ENCODE measurements at regions of chr13 and their contacts with region 1.

Region 1: DNA sequence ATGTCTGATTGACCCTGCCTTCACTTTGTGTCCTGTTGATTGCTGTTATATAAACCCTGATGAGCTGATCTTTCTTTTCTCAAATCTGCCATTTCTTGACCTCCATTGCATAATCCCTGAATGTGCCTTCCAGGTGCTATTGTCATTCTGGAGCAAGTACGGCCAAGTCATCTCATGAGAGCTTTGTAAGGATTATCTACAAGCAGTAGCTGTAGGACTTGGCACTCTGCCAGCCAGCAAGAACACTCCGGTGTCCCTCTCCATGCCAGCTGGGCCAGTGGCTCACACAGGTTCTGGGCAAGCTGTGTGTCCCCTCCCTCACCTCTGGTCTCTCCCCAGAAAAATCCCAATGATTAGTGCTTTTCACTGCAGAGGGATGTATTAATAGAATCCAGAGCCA is 348.1 kb downstream of the FOXO1 start:
- DNase-seq: peak; percentile 55
- H3K4me3 ChIP-seq: no peak overlapping the region
- H3K27ac ChIP-seq: no peak overlapping the region
- H3K4me1 ChIP-seq: peaks cover 16% of the 10 kb centered on the region
- H3K27me3 ChIP-seq: no peaks in the 10 kb centered on the region
- CTCF ChIP-seq: no peak
- POLR2A ChIP-seq: no peak

Region 2: GRCh38 chr13:39892721-39893685 is 425.4 kb before region 1 on chr13:
- CTCF ChIA-PET with region 1: no interaction called
- POLR2A ChIA-PET with region 1: no interaction called
- dilution Hi-C with region 1: no loop called
- intact Hi-C with region 1: loop called (anchors 5 kb)
- DNase-seq: peak; percentile 95
- H3K4me3 ChIP-seq: peak overlapping the region in 1 of 3 experiments; percentile 6
- H3K27ac ChIP-seq: peak overlapping the region; percentile 86
- H3K4me1 ChIP-seq: peaks cover 52% of the 10 kb centered on the region
- H3K27me3 ChIP-seq: no peaks in the 10 kb centered on the region
- CTCF ChIP-seq: no peak
- POLR2A ChIP-seq: no peak

Region 3: DNA sequence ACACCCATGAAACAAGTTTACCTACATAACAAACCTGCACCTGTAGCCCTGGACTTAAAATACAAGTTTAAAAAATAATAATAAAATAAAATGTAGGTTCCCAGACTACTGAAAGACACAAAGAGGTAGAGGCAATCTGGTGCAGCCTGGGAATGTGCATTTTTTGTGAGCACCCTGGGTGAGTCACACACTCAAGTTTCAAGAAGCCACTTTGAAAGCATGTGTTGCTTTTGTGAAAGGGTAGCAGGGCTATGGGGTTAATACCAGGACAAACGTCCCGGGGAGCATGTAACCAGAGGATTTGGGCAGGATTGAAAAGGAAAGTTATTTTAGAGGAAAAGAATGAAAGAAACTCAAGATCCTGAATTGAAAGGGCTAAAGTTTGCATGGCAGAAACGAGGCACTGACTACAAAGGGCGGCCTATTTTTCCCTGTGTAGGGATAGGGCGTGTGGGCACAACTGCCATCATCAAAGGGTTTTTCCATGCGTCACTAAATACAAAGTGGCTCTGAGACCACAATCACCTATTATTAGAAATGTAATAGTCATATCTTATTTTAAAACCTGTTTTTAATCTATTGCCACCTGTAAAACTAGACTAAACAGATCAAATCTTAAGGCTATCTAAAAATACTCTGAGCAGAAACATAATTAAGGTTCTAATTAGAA is 348.1 kb before region 1 on chr13:
- CTCF ChIA-PET with region 1: no interaction called
- POLR2A ChIA-PET with region 1: no interaction called
- dilution Hi-C with region 1: no loop called
- intact Hi-C with region 1: no loop called
- DNase-seq: no peak
- H3K4me3 ChIP-seq: no peak overlapping the region
- H3K27ac ChIP-seq: no peak overlapping the region
- H3K4me1 ChIP-seq: peaks cover 6% of the 10 kb centered on the region
- H3K27me3 ChIP-seq: no peaks in the 10 kb centered on the region
- CTCF ChIP-seq: no peak
- POLR2A ChIP-seq: no peak

Region 4: DNA sequence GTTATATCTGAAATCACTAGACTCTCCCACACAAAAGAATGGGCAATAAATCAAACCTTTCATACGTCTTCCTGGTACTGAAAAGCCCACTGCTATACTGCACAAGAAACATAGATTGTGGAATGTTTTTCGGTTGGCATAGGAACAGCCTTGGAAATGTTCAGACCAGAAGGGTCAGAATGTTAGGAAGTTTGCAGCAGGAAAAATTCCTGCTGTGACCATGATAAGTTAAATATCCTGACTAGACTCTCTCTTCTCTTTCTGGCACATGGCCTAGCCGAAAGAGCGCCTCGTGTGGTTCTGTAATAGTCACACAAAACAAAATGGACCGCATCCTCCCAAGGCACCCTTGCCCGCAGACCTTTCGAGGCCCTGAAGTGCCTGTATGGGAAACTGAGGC is 235.7 kb before region 1 on chr13:
- CTCF ChIA-PET with region 1: no interaction called
- POLR2A ChIA-PET with region 1: no interaction called
- dilution Hi-C with region 1: no loop called
- intact Hi-C with region 1: loop called (anchors 1 kb)
- DNase-seq: peak; percentile 99
- H3K4me3 ChIP-seq: no peak overlapping the region
- H3K27ac ChIP-seq: peak overlapping the region; percentile 71
- H3K4me1 ChIP-seq: peaks cover 11% of the 10 kb centered on the region
- H3K27me3 ChIP-seq: no peaks in the 10 kb centered on the region
- CTCF ChIP-seq: peak; percentile 30 to 62
- POLR2A ChIP-seq: no peak

Region 5: DNA sequence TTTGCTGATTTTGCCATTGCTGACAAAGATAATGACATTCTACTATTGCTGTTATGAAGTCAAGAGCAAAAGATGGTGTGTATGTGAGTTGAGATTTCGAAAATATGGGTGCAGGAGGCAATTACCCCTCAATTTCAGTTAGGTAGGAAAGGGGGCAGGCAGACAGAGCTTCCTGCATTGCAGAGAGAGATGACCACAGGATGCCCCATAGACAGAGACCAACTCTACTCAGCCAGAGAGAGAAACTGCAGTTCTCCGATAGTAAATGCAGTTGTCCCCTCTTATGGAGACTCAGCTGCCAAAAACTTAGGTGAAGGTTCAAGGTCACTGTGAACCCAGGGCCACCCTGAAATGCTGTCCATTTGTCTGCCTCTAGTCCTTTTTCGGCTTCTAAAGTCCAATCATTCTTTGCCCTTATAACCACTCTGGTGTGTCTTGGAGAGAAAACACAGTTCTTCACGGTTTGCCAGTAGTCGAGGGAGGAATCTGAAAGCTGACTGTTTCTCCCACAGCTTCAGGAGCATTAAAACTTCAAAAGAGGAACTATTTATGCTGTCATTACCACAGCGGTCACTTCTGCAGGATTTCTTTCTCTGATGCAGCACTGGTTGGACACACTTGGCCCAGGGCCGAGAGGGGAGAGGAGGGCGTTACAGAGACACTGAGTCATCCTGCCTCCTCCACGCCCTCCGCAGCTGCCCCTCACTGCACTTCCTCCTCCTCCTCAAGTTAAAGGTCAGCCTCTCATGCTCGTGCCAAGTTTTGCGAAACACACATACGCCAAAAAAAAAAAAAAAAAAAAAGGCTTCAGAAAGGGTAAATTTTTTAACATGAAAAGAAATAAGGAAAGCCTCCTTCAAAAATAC is 83.8 kb after region 1 on chr13:
- CTCF ChIA-PET with region 1: interaction called, 5 read pairs
- POLR2A ChIA-PET with region 1: no interaction called
- dilution Hi-C with region 1: no loop called
- intact Hi-C with region 1: loop called (anchors 1 kb)
- DNase-seq: peak; percentile 93
- H3K4me3 ChIP-seq: no peak overlapping the region
- H3K27ac ChIP-seq: peak overlapping the region; percentile 61
- H3K4me1 ChIP-seq: peaks cover 31% of the 10 kb centered on the region
- H3K27me3 ChIP-seq: no peaks in the 10 kb centered on the region
- CTCF ChIP-seq: no peak
- POLR2A ChIP-seq: no peak

Region 6: GRCh38 chr13:40558656-40559055 is 240.3 kb after region 1 on chr13:
- CTCF ChIA-PET with region 1: no interaction called
- POLR2A ChIA-PET with region 1: no interaction called
- dilution Hi-C with region 1: no loop called
- intact Hi-C with region 1: loop called (anchors 2 kb)
- DNase-seq: peak; percentile 95
- H3K4me3 ChIP-seq: peak overlapping the region in 1 of 3 experiments; percentile 1
- H3K27ac ChIP-seq: peak overlapping the region; percentile 61
- H3K4me1 ChIP-seq: peaks cover 56% of the 10 kb centered on the region
- H3K27me3 ChIP-seq: no peaks in the 10 kb centered on the region
- CTCF ChIP-seq: no peak
- POLR2A ChIP-seq: peak; percentile 35

Region 7: DNA sequence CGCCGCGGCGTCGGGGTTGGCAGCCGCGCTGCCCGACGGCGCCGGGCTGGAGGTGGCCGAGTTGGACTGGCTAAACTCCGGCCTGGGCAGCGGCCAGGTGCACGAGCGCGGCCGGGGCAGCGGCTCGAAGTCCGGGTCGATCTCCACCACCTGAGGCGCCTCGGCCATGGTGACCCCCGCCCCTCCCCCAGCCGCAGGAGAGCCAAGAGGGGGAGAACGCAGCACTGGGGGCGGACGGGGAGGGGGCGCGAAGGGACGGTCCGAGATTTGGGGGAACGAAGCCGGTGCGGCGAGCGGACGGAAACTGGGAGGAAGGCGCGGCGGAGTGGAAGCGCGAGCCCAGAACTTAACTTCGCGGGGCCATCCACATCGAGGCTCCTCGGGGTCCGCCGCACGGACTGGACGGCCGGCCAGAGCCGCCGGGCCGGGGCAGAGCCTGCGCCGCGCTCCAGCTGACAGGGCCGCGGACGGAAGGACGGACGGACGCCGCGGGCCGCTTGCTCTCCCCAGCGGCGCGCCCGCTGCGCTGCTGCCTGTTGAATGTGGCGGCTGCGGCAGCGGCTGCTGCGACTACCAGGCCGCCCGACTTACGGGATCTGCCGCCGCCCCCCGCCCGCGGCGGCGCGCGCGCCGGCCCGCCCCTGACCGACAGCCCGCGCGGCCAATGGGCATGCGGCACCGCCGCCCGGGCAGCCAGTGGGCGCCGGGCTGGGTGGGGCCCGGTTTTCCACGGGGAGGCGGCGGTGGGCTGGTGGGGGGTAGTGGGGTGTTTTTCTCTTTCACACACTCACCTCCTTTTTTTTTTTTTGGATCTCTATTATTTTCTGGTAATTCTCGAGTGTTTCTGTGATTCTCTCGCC is 347.9 kb after region 1 on chr13 and contains the start of gene FOXO1:
- CTCF ChIA-PET with region 1: no interaction called
- POLR2A ChIA-PET with region 1: no interaction called
- dilution Hi-C with region 1: no loop called
- intact Hi-C with region 1: loop called (anchors 1 kb)
- DNase-seq: peak; percentile 79
- H3K4me3 ChIP-seq: peak within 1 kb of the TSS; percentile 67 to 95 (median 86)
- H3K27ac ChIP-seq: peak within 1 kb of the TSS; percentile 81
- H3K4me1 ChIP-seq: peaks cover 24% of the 10 kb centered on the region
- H3K27me3 ChIP-seq: no peaks in the 10 kb centered on the region
- CTCF ChIP-seq: no peak
- POLR2A ChIP-seq: peak; percentile 97
- total RNA-seq, gene FOXO1: 47.6 and 48.5 TPM in 2 replicates

Measured in endothelial cell of umbilical vein (primary cell).